B cell (primary cell): ENCODE measurements at regions of chr2 and their contacts with region 1.

Region 1: GRCh38 chr2:241110607-241111439 is 8.7 kb upstream of the MTERF4 start:
- DNase-seq: peak; percentile 88
- ATAC-seq: peak; percentile 79
- H3K4me3 ChIP-seq: peak overlapping the region in 1 of 5 experiments; percentile 3
- H3K4me3 Mint-ChIP-seq: peak overlapping the region; percentile 74
- H3K27ac ChIP-seq: peak overlapping the region; percentile 89 to 95
- H3K27ac Mint-ChIP-seq: peak overlapping the region; percentile 97
- H3K4me1 ChIP-seq: peaks cover 35 to 59% of the 10 kb centered on the region in 2 donors
- H3K4me1 Mint-ChIP-seq: peaks cover 53% of the 10 kb centered on the region
- H3K27me3 ChIP-seq: no peaks in the 10 kb centered on the region
- H3K27me3 Mint-ChIP-seq: no peaks in the 10 kb centered on the region
- CTCF ChIP-seq: no peak

Region 2: DNA sequence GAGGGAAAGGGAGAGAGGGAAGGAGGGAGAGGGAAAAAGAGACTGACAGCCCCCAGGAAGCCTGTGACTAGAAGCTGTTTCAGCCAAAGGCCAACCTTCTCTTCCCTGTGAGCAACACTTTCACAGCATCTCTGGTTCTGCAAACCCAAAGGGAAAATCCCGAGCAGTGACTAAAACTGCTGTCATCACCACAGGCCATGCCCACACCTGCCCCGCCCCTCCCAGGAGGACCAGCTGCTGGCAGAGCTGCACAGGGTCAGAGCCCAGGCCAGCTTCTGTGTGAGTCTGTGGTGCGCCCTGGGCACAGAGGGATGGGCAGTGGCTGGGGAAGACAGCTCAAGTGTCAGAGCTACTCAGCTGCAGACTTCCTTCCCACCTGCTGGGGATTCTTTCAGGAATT is 905.5 kb before region 1 on chr2:
- CTCF ChIA-PET with region 1: no interaction called
- POLR2A ChIA-PET with region 1: no interaction called
- intact Hi-C with region 1: no loop called
- DNase-seq: no peak
- ATAC-seq: no peak
- H3K4me3 ChIP-seq: no peak overlapping the region
- H3K4me3 Mint-ChIP-seq: no peak overlapping the region
- H3K27ac ChIP-seq: no peak overlapping the region
- H3K27ac Mint-ChIP-seq: no peak overlapping the region
- H3K4me1 ChIP-seq: no peaks in the 10 kb centered on the region
- H3K4me1 Mint-ChIP-seq: no peaks in the 10 kb centered on the region
- H3K27me3 ChIP-seq: no peaks in the 10 kb centered on the region
- H3K27me3 Mint-ChIP-seq: peaks cover 20% of the 10 kb centered on the region
- CTCF ChIP-seq: no peak

Region 3: DNA sequence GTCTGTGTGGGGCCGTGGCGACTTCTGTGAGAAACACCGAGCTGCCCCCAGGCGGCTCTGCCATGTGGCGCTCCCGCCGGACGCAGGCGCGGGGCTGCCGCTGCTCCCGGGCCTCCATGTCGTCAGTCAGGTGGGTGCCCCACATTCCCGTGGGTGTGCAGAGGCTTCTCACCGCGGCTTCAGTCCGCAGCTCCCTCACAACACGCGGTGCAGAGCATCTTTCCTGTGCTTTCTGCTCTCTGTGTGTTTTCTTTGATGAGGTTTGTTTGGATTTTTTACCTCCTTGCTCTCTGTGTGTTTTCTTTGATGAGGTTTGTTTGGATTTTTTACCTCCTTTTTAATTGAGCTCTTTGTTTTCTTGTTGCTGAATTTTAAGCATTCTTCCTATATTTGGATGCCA is 406.2 kb before region 1 on chr2:
- CTCF ChIA-PET with region 1: no interaction called
- POLR2A ChIA-PET with region 1: no interaction called
- intact Hi-C with region 1: no loop called
- DNase-seq: no peak
- ATAC-seq: no peak
- H3K4me3 ChIP-seq: no peak overlapping the region
- H3K4me3 Mint-ChIP-seq: no peak overlapping the region
- H3K27ac ChIP-seq: no peak overlapping the region
- H3K27ac Mint-ChIP-seq: no peak overlapping the region
- H3K4me1 ChIP-seq: no peaks in the 10 kb centered on the region
- H3K4me1 Mint-ChIP-seq: no peaks in the 10 kb centered on the region
- H3K27me3 ChIP-seq: peaks cover 0 to 6% (median 0%) of the 10 kb centered on the region in 4 experiments
- H3K27me3 Mint-ChIP-seq: peaks cover 22% of the 10 kb centered on the region
- CTCF ChIP-seq: no peak

Region 4: GRCh38 chr2:241036397-241036963 is 74.3 kb before region 1 on chr2:
- CTCF ChIA-PET with region 1: no interaction called
- POLR2A ChIA-PET with region 1: interaction called, 4 read pairs
- intact Hi-C with region 1: loop called (anchors 2 kb)
- DNase-seq: peak; percentile 87
- ATAC-seq: peak; percentile 69
- H3K4me3 ChIP-seq: peak overlapping the region in 4 of 5 experiments; percentile 39 to 79 (median 65)
- H3K4me3 Mint-ChIP-seq: peak overlapping the region; percentile 92
- H3K27ac ChIP-seq: peak overlapping the region; percentile 68 to 79
- H3K27ac Mint-ChIP-seq: peak overlapping the region; percentile 94
- H3K4me1 ChIP-seq: peaks cover 38 to 59% of the 10 kb centered on the region in 2 donors
- H3K4me1 Mint-ChIP-seq: peaks cover 57% of the 10 kb centered on the region
- H3K27me3 ChIP-seq: no peaks in the 10 kb centered on the region
- H3K27me3 Mint-ChIP-seq: no peaks in the 10 kb centered on the region
- CTCF ChIP-seq: no peak

Region 5: GRCh38 chr2:241125626-241126025 is 14.8 kb after region 1 on chr2:
- CTCF ChIA-PET with region 1: no interaction called
- POLR2A ChIA-PET with region 1: interaction called, 9 read pairs
- intact Hi-C with region 1: loop called (anchors 1 kb)
- DNase-seq: peak; percentile 63
- ATAC-seq: no peak
- H3K4me3 ChIP-seq: peak overlapping the region in 1 of 5 experiments; percentile 10
- H3K4me3 Mint-ChIP-seq: peak overlapping the region; percentile 67
- H3K27ac ChIP-seq: peak overlapping the region; percentile 94 to 97
- H3K27ac Mint-ChIP-seq: peak overlapping the region; percentile 99
- H3K4me1 ChIP-seq: peaks cover 44 to 61% of the 10 kb centered on the region in 2 donors
- H3K4me1 Mint-ChIP-seq: peaks cover 53% of the 10 kb centered on the region
- H3K27me3 ChIP-seq: no peaks in the 10 kb centered on the region
- H3K27me3 Mint-ChIP-seq: no peaks in the 10 kb centered on the region
- CTCF ChIP-seq: no peak